ENCODE measurements at regions of chr12 and their contacts with region 1.

Region 1: DNA sequence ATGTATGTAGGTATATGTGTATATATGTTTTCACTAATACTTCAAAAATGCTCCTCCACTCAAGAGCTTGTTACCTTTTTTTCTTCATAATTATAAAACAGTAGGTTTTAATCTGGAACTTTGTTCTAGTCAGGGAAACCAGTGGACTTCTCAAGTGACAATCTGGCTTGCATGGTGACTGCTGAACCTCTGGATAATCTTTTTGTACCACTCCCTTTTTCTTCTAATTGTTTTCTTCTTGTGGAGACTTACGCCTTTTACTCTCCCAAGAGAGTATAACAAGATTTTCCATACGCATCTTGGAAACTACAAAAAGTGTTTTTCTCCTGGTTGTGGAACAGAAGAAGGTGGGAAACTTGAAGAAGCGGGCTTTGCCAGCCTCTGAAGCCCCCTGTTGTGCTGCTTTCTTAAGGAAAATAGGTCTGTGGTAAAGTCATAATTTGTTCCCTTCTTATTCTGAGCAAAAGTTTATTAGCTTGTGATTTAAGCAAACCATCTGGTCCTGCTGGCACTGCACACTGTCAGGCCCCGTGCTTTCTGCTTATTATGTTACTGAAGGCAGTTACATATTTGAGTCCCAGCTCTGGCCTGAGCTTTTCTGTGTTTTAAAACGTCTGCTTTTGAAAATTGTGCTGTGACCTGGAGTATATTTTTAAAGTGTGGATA is 291.8 kb downstream of the ERC1 start:
- DNase-seq: peak; percentile 90
- H3K4me3 ChIP-seq: peak overlapping the region in 1 of 4 donors; percentile 2
- H3K27ac ChIP-seq: peak overlapping the region; percentile 62 to 86 (median 72)
- H3K4me1 ChIP-seq: peaks cover 4 to 37% (median 31%) of the 10 kb centered on the region in 4 donors
- H3K27me3 ChIP-seq: no peaks in the 10 kb centered on the region
- CTCF ChIP-seq: no peak
- EP300 ChIP-seq: peak in 1 of 4 donors; percentile 27
- POLR2A ChIP-seq: no peak

Region 2: GRCh38 chr12:1204581-1205121 is 78.2 kb before region 1 on chr12:
- intact Hi-C with region 1: loop called (anchors 5 kb)
- DNase-seq: no peak
- H3K4me3 ChIP-seq: peak overlapping the region; percentile 18 to 46 (median 36)
- H3K27ac ChIP-seq: peak overlapping the region; percentile 22 to 72 (median 64)
- H3K4me1 ChIP-seq: peaks cover 0 to 47% (median 30%) of the 10 kb centered on the region in 4 donors
- H3K27me3 ChIP-seq: no peaks in the 10 kb centered on the region
- CTCF ChIP-seq: no peak
- EP300 ChIP-seq: no peak
- POLR2A ChIP-seq: no peak

Region 3: GRCh38 chr12:1594261-1595025 is 311.6 kb after region 1 on chr12 and contains the start of gene FBXL14:
- intact Hi-C with region 1: loop called (anchors 5 kb)
- DNase-seq: peak; percentile 95
- H3K4me3 ChIP-seq: peak within 1 kb of the TSS; percentile 71 to 93 (median 81)
- H3K27ac ChIP-seq: peak within 1 kb of the TSS; percentile 93 to 100 (median 96)
- H3K4me1 ChIP-seq: peaks cover 0 to 59% (median 44%) of the 10 kb centered on the region in 4 donors
- H3K27me3 ChIP-seq: no peaks in the 10 kb centered on the region
- CTCF ChIP-seq: no peak
- EP300 ChIP-seq: no peak
- POLR2A ChIP-seq: no peak
- total RNA-seq, gene FBXL14: 7.5 to 12.2 (median 10.0) TPM